ENCODE measurements at regions of chr11 and their contacts with region 1.

Region 1: DNA sequence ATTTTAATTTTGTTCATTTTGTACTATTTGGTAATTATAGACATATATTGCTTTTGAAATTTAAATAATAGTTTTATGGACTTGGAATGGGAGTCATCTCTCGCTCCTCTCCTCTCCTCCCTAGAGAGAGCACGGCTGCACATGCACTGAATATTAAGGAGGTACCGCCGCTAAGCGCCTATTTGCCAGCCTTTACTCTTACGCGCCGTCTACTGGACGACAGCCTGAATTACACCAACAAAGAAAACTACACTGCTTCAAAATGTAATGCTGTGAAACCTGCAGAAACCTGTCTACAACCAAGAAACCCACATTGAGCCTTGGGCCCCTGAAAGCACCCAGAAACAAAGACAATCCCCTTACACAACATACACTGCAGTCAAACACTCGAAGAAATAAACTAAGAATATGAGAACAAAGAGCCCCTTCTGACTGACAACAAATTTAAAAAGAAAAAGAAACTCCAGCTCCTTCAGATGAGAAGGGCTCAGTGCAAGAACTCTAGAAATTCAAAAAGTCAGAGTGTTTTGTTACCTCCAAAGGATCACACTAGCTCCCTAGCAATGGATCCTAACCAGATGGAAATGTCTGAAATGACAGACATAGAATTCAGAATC is 737.2 kb downstream of the LRRC4C start:
- DNase-seq: no peak
- ATAC-seq: peak; percentile 91
- H3K4me3 ChIP-seq: no peak overlapping the region
- H3K27ac ChIP-seq: no peak overlapping the region
- H3K4me1 ChIP-seq: no peaks in the 10 kb centered on the region
- H3K27me3 ChIP-seq: no peaks in the 10 kb centered on the region
- CTCF ChIP-seq: peak; percentile 59 to 83 (median 61)
- EP300 ChIP-seq: no peak
- POLR2A ChIP-seq: no peak
- RAD21 ChIP-seq: peak; percentile 34; the same call in 1 of the 2 replicates

Region 2: DNA sequence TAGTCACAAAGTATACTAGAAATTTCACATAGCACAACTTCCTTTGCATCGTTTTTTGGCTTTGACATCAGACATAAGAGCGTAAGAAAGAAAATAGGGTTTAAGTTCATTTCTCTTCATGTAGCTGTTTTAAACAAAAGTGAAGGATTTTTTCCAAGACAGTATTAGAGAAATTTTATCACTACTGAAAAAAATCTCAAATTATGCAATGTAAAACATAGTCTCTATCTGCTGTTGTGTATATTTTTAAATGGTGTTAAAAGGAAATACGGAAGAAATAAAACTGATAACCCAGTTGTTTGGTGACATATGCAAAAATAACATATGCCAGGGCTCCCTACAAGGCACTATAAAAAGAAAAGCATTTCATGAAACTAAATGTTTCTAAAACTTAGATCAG is 712.3 kb before region 1 on chr11:
- CTCF ChIA-PET with region 1: no interaction called
- POLR2A ChIA-PET with region 1: no interaction called
- RAD21 ChIA-PET with region 1: no interaction called
- SMC1A ChIA-PET with region 1: no interaction called
- in situ Hi-C with region 1: no loop called
- intact Hi-C with region 1: no loop called
- DNase-seq: no peak
- ATAC-seq: no peak
- H3K4me3 ChIP-seq: no peak overlapping the region
- H3K27ac ChIP-seq: no peak overlapping the region
- H3K4me1 ChIP-seq: no peaks in the 10 kb centered on the region
- H3K27me3 ChIP-seq: no peaks in the 10 kb centered on the region
- CTCF ChIP-seq: no peak
- EP300 ChIP-seq: no peak
- POLR2A ChIP-seq: no peak
- RAD21 ChIP-seq: no peak

Region 3: DNA sequence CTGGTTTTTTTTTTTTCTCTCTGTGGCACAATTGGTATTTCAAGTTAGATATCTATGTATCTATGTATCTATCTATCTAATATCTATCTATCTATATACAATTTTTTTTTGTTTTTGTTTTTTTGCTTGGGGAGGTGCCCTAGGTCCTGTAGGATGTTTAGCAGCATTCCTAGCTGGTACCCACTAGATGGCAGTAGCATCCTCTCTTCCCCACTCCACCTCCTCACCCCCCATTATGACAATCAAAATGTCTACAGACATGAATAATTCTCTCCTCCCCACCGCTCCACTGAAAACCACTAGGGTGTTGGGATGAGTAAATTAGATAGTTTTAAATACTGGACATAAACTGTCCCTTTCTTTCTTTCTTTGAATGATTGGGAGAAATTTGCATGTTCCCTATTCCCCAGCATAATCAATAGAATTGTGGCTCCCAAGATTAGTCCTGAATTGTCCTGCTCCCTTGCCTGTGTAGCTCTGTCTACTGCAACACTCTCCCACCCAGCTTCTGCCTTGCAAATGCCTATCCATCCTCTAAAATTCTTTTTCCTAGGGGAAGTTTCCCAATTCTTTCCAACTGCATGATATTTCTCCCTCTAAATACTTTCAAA is 415.2 kb before region 1 on chr11:
- CTCF ChIA-PET with region 1: interaction called, 10 read pairs
- POLR2A ChIA-PET with region 1: no interaction called
- RAD21 ChIA-PET with region 1: no interaction called
- SMC1A ChIA-PET with region 1: interaction called, 4 read pairs
- in situ Hi-C with region 1: no loop called
- intact Hi-C with region 1: loop called (anchors 1 kb)
- DNase-seq: no peak
- ATAC-seq: peak; percentile 88
- H3K4me3 ChIP-seq: no peak overlapping the region
- H3K27ac ChIP-seq: no peak overlapping the region
- H3K4me1 ChIP-seq: no peaks in the 10 kb centered on the region
- H3K27me3 ChIP-seq: no peaks in the 10 kb centered on the region
- CTCF ChIP-seq: peak; percentile 45 to 65 (median 54)
- EP300 ChIP-seq: no peak
- POLR2A ChIP-seq: no peak
- RAD21 ChIP-seq: peak; percentile 57